ENCODE measurements at regions of chr13 and their contacts with region 1.

Region 1: DNA sequence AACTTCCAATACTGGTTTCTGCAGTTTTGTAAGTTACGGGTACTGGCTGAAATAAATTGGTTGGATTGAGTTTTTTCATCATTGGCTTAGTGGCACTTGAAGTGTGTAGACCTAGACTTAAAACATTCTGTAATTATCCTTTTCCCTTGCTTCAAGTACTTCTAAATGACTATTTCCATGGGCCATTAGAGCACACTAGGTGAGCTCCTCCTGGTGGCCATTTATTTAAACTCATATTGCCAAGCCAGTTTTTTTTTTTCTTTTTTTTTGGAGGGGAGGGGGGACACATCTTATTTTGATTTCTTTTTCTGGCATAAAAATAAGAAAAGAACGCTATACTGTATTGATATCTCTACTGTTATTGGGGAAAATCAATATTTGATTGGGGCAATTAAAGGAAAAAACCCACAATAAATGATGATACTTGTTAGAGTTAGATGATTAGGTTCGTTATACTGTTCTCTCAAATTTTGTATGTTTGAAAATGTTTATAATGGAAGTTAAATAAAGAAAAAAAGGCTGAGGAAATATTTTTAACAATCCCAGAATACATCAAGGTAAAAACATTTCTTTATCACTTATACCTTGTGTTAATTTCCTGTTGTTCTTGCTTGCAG is 82.9 kb downstream of the PDS5B start:
- DNase-seq: peak; percentile 12
- ATAC-seq: peak; percentile 60
- H3K4me3 Mint-ChIP-seq: no peak overlapping the region
- H3K27ac Mint-ChIP-seq: no peak overlapping the region
- H3K4me1 Mint-ChIP-seq: peaks cover 9% of the 10 kb centered on the region
- H3K27me3 Mint-ChIP-seq: no peaks in the 10 kb centered on the region

Region 2: GRCh38 chr13:31880851-31881499 is 788.2 kb before region 1 on chr13:
- CTCF ChIA-PET with region 1: no interaction called
- POLR2A ChIA-PET with region 1: no interaction called
- intact Hi-C with region 1: no loop called
- DNase-seq: no peak
- ATAC-seq: no peak
- H3K4me3 Mint-ChIP-seq: no peak overlapping the region
- H3K27ac Mint-ChIP-seq: no peak overlapping the region
- H3K4me1 Mint-ChIP-seq: peaks cover 4% of the 10 kb centered on the region
- H3K27me3 Mint-ChIP-seq: no peaks in the 10 kb centered on the region

Region 3: GRCh38 chr13:32538621-32539246 is 130.4 kb before region 1 on chr13 and contains the start of gene N4BP2L2:
- CTCF ChIA-PET with region 1: no interaction called
- POLR2A ChIA-PET with region 1: no interaction called
- intact Hi-C with region 1: no loop called
- DNase-seq: peak; percentile 94
- ATAC-seq: peak; percentile 96
- H3K4me3 Mint-ChIP-seq: peak within 1 kb of the TSS; percentile 93
- H3K27ac Mint-ChIP-seq: peak within 1 kb of the TSS; percentile 98
- H3K4me1 Mint-ChIP-seq: peaks cover 39% of the 10 kb centered on the region
- H3K27me3 Mint-ChIP-seq: peaks cover 4% of the 10 kb centered on the region
- total RNA-seq, gene N4BP2L2: 95.1 to 105 TPM

Region 4: GRCh38 chr13:32682740-32683139 is 13.6 kb after region 1 on chr13:
- CTCF ChIA-PET with region 1: interaction called, 14 read pairs
- POLR2A ChIA-PET with region 1: no interaction called
- intact Hi-C with region 1: no loop called
- DNase-seq: no peak
- ATAC-seq: no peak
- H3K4me3 Mint-ChIP-seq: no peak overlapping the region
- H3K27ac Mint-ChIP-seq: peak overlapping the region; percentile 39
- H3K4me1 Mint-ChIP-seq: peaks cover 13% of the 10 kb centered on the region
- H3K27me3 Mint-ChIP-seq: no peaks in the 10 kb centered on the region

Measured in activated CD4-positive, alpha-beta T cell treated with anti-CD3 and anti-CD28 coated beads for 36 hours (primary cell).